ENCODE measurements at regions of chr4 and their contacts with region 1.

Region 1: GRCh38 chr4:145808021-145808650 is 128.2 kb downstream of the C4orf51 start:
- DNase-seq: peak; percentile 65
- ATAC-seq: peak; percentile 82
- H3K4me3 Mint-ChIP-seq: peak overlapping the region; percentile 39
- H3K27ac Mint-ChIP-seq: peak overlapping the region; percentile 95
- H3K4me1 Mint-ChIP-seq: peaks cover 59% of the 10 kb centered on the region
- H3K27me3 Mint-ChIP-seq: no peaks in the 10 kb centered on the region

Region 2: DNA sequence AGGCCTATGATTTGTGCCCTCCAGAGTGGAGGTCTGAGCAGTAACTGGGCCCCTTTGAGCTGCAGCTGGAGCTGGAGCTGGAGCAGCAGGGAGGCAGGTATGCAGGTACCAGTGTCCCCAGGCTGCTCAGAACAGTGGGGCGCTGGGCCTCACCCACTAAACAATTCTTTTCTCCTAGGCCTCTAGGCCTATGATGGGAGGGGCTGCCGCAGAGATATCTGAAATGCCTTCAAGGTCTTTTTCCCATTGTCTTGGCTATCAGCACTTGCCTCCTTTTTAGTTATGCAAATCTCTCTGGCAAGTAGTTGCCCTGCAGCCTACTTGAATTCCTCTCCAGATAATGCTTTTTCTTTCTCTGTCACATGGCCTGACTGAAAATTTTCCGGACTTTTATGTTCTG is 548.0 kb before region 1 on chr4:
- CTCF ChIA-PET with region 1: no interaction called
- POLR2A ChIA-PET with region 1: no interaction called
- intact Hi-C with region 1: no loop called
- DNase-seq: no peak
- ATAC-seq: no peak
- H3K4me3 Mint-ChIP-seq: no peak overlapping the region
- H3K27ac Mint-ChIP-seq: no peak overlapping the region
- H3K4me1 Mint-ChIP-seq: no peaks in the 10 kb centered on the region
- H3K27me3 Mint-ChIP-seq: peaks cover 3% of the 10 kb centered on the region

Region 3: DNA sequence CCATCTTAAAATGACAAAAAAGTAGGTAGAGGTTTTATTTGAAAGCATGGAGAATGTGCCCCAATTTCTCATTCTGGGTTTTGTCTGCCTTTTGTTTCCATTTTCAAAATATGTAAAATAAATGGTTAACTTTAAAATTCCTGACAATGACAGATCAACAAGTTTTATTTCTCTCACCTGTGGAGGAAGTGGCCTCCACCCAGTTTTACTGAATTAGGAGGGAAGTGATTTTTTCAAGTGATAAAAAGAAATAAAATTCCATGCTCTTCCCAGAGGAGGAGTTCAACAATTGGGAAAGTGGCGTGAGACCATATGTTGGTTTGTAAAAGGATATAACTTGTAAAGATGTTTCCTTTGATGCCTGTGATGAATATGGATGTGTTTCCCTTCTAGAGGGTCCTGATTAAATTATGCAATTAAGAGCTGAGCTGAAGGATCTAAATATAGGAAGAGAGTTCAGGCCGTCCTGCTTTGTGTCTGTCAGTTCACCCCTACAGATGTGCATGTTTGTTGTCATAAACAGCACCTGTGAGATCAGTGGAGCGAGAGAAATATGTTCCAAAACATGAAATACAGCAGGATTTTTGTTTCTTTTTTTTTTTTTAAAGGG is 307.0 kb before region 1 on chr4:
- CTCF ChIA-PET with region 1: no interaction called
- POLR2A ChIA-PET with region 1: no interaction called
- intact Hi-C with region 1: no loop called
- DNase-seq: no peak
- ATAC-seq: no peak
- H3K4me3 Mint-ChIP-seq: no peak overlapping the region
- H3K27ac Mint-ChIP-seq: no peak overlapping the region
- H3K4me1 Mint-ChIP-seq: peaks cover 31% of the 10 kb centered on the region
- H3K27me3 Mint-ChIP-seq: no peaks in the 10 kb centered on the region

Region 4: DNA sequence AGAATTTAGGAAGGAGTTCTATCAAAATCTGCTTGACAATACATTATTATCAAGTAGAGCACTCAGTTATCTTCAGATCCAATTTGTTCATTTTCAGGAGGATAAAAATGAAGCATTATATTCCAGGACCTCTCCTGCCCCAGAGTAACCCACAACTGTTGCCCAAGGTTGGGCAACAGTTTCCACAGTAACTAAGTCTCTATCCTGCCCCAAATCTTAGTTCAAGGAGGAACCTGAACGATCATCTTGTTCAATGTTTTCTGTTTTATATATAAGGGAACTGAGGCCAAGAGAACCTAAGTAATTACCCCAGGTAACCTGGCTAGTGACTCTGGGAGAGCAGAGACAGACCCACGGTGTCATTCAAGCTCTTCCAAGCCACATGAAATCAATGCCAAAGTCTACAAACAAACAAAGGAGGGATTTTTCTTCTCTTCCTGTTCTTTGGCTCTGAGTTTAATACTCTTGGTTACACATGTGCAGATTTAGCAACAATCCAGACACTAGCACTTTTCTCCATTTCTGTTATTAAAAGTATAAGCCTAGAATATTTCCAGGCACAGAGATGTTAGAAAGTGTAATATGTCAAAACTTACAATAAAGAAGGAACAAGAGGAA is 22.6 kb before region 1 on chr4:
- CTCF ChIA-PET with region 1: no interaction called
- POLR2A ChIA-PET with region 1: interaction called, 4 read pairs
- intact Hi-C with region 1: loop called in 1 of 2 experiments (anchors 2 kb)
- DNase-seq: no peak
- ATAC-seq: no peak
- H3K4me3 Mint-ChIP-seq: no peak overlapping the region
- H3K27ac Mint-ChIP-seq: no peak overlapping the region
- H3K4me1 Mint-ChIP-seq: peaks cover 26% of the 10 kb centered on the region
- H3K27me3 Mint-ChIP-seq: no peaks in the 10 kb centered on the region

Region 5: DNA sequence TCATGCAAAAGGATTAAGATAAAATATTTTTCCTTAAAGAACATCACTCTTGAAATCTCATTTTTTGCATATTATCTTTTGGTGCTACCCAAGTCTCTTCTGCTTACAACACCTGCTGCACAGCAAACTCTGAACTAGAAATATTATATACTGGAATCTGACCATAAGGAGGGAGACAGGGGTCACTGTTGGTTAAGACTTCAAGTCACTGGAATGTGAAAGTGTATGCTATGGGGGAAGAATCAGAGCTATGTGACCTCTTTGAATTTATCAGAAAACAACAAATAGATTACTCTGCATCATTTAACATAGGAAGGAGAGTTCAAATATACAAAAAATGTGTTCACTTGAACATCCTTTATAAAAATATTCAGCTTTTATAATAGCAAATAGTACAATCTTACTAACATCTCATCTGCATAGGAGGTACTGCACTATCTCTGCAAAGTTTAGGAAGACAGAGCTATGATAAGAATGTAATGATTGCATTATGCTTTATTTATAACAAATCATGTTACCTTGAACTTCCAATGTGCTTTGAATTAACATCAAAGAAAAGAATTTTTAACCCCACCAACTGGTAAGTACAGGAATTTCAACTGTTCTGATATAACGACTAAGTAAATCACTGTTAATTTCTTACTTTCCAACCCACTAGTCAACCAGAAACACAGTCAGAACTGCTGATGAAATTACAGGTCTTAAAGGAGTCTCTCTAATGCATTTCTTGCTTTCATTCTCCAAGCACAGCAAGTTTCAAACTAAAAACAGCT is 60.7 kb after region 1 on chr4:
- CTCF ChIA-PET with region 1: interaction called, 3 read pairs
- POLR2A ChIA-PET with region 1: no interaction called
- intact Hi-C with region 1: loop called in 1 of 2 experiments (anchors 2 kb)
- DNase-seq: no peak
- ATAC-seq: peak; percentile 91
- H3K4me3 Mint-ChIP-seq: no peak overlapping the region
- H3K27ac Mint-ChIP-seq: no peak overlapping the region
- H3K4me1 Mint-ChIP-seq: peaks cover 31% of the 10 kb centered on the region
- H3K27me3 Mint-ChIP-seq: no peaks in the 10 kb centered on the region

Region 6: DNA sequence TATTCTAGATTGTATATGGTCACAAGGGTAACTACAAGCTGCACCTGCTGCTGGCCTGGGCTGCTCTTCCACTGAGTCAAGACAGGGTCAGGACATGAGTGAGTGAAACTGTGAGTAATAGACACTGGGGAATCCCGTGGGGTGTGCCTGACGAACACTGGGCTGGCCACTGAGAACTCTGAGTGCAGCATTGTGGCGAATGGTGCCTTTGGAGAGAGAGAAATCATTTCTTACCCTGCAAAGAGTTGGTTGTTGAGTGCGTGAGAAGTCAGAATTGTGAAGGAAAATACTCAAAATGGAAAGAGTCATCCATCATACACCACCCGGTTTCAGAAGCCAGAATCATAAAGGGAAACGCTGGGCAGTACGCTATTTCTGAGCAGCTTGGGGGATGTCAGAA is 324.3 kb after region 1 on chr4:
- CTCF ChIA-PET with region 1: no interaction called
- POLR2A ChIA-PET with region 1: no interaction called
- intact Hi-C with region 1: loop called in 1 of 2 experiments (anchors 1 kb)
- DNase-seq: peak; percentile 81
- ATAC-seq: peak; percentile 99
- H3K4me3 Mint-ChIP-seq: no peak overlapping the region
- H3K27ac Mint-ChIP-seq: no peak overlapping the region
- H3K4me1 Mint-ChIP-seq: peaks cover 13% of the 10 kb centered on the region
- H3K27me3 Mint-ChIP-seq: peaks cover 5% of the 10 kb centered on the region

Region 7: DNA sequence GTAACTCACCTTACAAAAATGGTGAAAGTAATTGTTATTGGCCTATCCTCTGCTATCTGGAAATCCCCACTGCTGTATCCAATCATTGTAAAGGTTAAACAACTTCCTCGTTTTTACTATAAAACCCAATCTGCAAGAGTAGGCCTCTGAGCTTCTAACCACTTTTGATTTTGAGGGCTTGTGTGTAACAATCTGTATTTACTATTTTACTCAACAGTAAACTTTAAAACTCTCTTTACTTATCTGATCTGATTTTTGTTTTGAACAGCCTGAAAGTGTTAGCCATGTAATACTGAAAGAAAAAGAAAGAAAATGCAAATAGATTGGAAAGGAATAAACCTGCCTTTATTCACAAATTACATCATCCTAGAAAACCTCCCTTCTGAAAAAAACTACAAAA is 650.5 kb after region 1 on chr4:
- CTCF ChIA-PET with region 1: no interaction called
- POLR2A ChIA-PET with region 1: no interaction called
- intact Hi-C with region 1: loop called in 1 of 2 experiments (anchors 10 kb)
- DNase-seq: no peak
- ATAC-seq: peak; percentile 96
- H3K4me3 Mint-ChIP-seq: peak overlapping the region; percentile 62
- H3K27ac Mint-ChIP-seq: peak overlapping the region; percentile 93
- H3K4me1 Mint-ChIP-seq: peaks cover 24% of the 10 kb centered on the region
- H3K27me3 Mint-ChIP-seq: no peaks in the 10 kb centered on the region